Activated B cell treated with CpG ODN at 0.5 μM for 24 hours (primary cell): ENCODE measurements at regions of chr1 and their contacts with region 1.

Region 1: DNA sequence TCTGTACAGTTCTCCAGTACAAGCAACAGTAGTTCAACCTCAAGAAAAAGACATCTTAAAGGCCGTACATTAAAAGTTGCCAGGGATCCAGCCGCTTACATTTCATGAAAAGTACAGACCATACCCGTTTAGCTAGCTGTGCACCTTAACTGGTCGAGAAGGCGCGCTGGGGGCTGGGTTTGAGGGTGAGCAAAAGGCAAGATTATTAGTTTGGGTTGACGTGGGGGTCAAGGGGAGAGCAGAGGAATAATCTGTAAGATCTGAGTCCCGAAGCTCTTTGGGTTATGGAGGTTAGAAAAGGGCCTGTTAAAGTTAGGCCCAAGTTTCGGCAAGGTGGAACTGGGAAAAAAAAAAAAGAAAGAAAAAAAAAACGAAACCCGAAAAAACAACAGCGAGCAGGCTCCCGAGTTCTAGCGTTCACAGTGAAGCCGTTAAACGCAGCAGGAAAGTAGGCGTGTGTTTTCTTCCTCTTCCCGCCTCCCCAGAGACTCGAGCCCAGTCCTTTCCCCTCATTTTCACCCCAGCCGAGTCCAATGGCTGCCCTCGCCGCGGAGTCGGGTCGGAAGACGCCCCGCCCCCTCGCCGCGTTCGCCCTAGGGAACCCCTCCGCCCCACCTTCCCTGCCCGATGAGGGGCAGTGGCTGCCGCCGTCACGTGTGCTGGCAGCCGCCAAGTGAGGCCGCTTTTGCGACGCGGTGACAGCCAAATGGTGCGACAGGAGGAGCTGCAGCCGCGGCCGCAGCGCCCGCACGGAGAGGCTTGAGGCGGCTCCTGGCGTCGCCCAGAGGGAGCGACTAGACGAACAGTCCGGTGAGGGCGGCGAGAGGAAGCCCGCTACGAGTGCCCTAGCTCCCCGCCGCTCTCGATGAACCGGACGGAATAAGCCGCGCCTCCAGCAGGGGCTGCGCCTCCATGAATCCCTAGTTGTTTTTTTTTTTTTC is at the start of gene PKN2:
- DNase-seq: peak; percentile 94
- ATAC-seq: peak; percentile 91
- H3K4me3 Mint-ChIP-seq: peak within 1 kb of the TSS; percentile 95
- H3K27ac Mint-ChIP-seq: peak within 1 kb of the TSS; percentile 97
- H3K4me1 Mint-ChIP-seq: peaks cover 28% of the 10 kb centered on the region
- H3K27me3 Mint-ChIP-seq: no peaks in the 10 kb centered on the region
- CTCF ChIP-seq: no peak
- total RNA-seq, gene PKN2: 29.4 and 42.7 TPM in 2 replicates

Region 2: DNA sequence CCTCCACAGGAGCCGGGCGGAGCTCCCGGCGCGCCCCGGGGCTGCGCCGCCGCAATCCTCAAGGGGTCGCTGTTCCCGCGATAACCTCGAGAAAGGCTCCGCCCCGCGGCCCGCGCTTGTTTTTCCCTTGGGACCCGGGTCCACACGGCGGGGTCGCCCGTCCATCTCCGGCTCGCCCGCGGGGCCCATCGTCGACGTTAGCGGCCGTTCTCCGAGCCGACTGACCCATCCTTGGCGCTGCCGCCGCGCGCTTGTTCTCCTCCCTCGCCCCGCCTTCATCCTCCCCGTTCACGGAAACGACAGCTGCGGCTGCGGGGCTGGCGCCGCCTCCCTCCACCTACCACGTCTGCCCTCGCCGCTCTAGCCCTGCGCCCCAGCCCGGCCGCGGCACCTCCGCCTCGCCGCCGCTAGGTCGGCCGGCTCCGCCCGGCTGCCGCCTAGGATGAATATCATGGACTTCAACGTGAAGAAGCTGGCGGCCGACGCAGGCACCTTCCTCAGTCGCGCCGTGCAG is 1979.3 kb before region 1 on chr1 and contains the start of gene SH3GLB1:
- CTCF ChIA-PET with region 1: no interaction called
- POLR2A ChIA-PET with region 1: interaction called, 15 read pairs
- intact Hi-C with region 1: loop called (anchors 10 kb)
- DNase-seq: peak; percentile 92
- ATAC-seq: peak; percentile 87
- H3K4me3 Mint-ChIP-seq: peak within 1 kb of the TSS; percentile 99
- H3K27ac Mint-ChIP-seq: peak within 1 kb of the TSS; percentile 99
- H3K4me1 Mint-ChIP-seq: peaks cover 46% of the 10 kb centered on the region
- H3K27me3 Mint-ChIP-seq: no peaks in the 10 kb centered on the region
- CTCF ChIP-seq: peak; percentile 26
- total RNA-seq, gene SH3GLB1: 63.8 and 63.9 TPM in 2 replicates

Region 3: DNA sequence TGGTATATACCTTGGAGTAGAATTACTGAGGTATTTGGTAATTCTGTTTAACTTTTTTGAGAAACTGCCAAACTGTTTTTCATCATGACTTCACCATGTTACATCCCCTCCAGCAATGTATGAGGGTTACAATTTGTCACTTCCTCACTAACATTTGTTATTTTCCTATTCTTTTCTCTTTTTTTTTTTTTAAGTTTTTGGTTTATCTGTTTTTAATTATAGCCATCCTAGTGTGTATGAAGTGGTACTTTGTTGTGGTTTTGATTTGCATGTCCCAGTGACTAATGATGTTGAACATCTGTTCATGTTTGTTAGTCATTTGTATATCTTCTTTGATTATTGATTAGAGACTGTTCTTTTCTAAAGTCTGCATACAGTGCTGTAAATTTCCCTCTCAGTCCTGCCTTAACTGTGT is 1622.1 kb before region 1 on chr1:
- CTCF ChIA-PET with region 1: no interaction called
- POLR2A ChIA-PET with region 1: no interaction called
- intact Hi-C with region 1: loop called (anchors 10 kb)
- DNase-seq: no peak
- ATAC-seq: peak; percentile 18
- H3K4me3 Mint-ChIP-seq: peak overlapping the region; percentile 47
- H3K27ac Mint-ChIP-seq: peak overlapping the region; percentile 90
- H3K4me1 Mint-ChIP-seq: peaks cover 87% of the 10 kb centered on the region
- H3K27me3 Mint-ChIP-seq: no peaks in the 10 kb centered on the region
- CTCF ChIP-seq: no peak

Region 4: DNA sequence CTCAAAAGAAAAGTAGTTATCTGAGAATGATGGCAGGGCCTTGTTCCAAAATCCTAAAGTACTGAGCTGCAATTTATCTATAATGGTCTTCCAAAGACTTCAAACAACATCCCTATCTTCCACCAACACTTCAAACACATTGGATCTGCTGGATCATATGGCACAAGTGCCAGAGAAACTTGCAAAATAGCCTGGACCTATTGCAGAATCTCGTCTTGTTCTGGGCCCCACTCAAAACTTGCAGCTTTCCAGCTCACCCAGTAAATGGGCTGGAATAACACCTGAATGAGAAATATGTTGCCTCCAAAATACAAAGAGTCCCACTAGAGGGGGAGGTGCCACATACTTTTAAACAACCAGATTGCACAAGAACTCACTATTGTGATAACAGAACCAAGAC is 43.8 kb before region 1 on chr1:
- CTCF ChIA-PET with region 1: no interaction called
- POLR2A ChIA-PET with region 1: no interaction called
- intact Hi-C with region 1: no loop called
- DNase-seq: no peak
- ATAC-seq: no peak
- H3K4me3 Mint-ChIP-seq: no peak overlapping the region
- H3K27ac Mint-ChIP-seq: no peak overlapping the region
- H3K4me1 Mint-ChIP-seq: no peaks in the 10 kb centered on the region
- H3K27me3 Mint-ChIP-seq: peaks cover 13% of the 10 kb centered on the region
- CTCF ChIP-seq: no peak

Region 5: GRCh38 chr1:88655685-88656299 is 28.0 kb before region 1 on chr1:
- CTCF ChIA-PET with region 1: interaction called, 5 read pairs
- POLR2A ChIA-PET with region 1: interaction called, 5 read pairs
- intact Hi-C with region 1: loop called (anchors 1 kb)
- DNase-seq: no peak
- ATAC-seq: no peak
- H3K4me3 Mint-ChIP-seq: no peak overlapping the region
- H3K27ac Mint-ChIP-seq: no peak overlapping the region
- H3K4me1 Mint-ChIP-seq: no peaks in the 10 kb centered on the region
- H3K27me3 Mint-ChIP-seq: peaks cover 2% of the 10 kb centered on the region
- CTCF ChIP-seq: no peak

Region 6: GRCh38 chr1:88891318-88891950 is 207.6 kb after region 1 on chr1 and contains the start of gene GTF2B:
- CTCF ChIA-PET with region 1: no interaction called
- POLR2A ChIA-PET with region 1: interaction called, 29 read pairs
- intact Hi-C with region 1: loop called (anchors 1 kb)
- DNase-seq: peak; percentile 90
- ATAC-seq: peak; percentile 91
- H3K4me3 Mint-ChIP-seq: peak within 1 kb of the TSS; percentile 99
- H3K27ac Mint-ChIP-seq: peak within 1 kb of the TSS; percentile 96
- H3K4me1 Mint-ChIP-seq: peaks cover 40% of the 10 kb centered on the region
- H3K27me3 Mint-ChIP-seq: no peaks in the 10 kb centered on the region
- CTCF ChIP-seq: no peak
- total RNA-seq, gene GTF2B: 30.0 and 32.2 TPM in 2 replicates

Region 7: GRCh38 chr1:89198491-89199072 is 514.8 kb after region 1 on chr1 and contains the start of gene GBP4:
- CTCF ChIA-PET with region 1: no interaction called
- POLR2A ChIA-PET with region 1: no interaction called
- intact Hi-C with region 1: loop called (anchors 10 kb)
- DNase-seq: peak; percentile 27
- ATAC-seq: peak; percentile 47
- H3K4me3 Mint-ChIP-seq: peak within 1 kb of the TSS; percentile 96
- H3K27ac Mint-ChIP-seq: peak within 1 kb of the TSS; percentile 92
- H3K4me1 Mint-ChIP-seq: peaks cover 76% of the 10 kb centered on the region
- H3K27me3 Mint-ChIP-seq: no peaks in the 10 kb centered on the region
- CTCF ChIP-seq: no peak
- total RNA-seq, gene GBP4: 19.2 and 19.5 TPM in 2 replicates